GM13976 (cell line): ENCODE measurements at regions of chr9 and their contacts with region 1.

Region 1: GRCh38 chr9:32251539-32251938 is 132.9 kb upstream of the ACO1 start:
- DNase-seq: peak; percentile 65
- CTCF ChIP-seq: peak; percentile 66

Region 2: GRCh38 chr9:32136700-32137339 is 114.7 kb before region 1 on chr9:
- in situ Hi-C with region 1: loop called (anchors 10 kb)
- DNase-seq: no peak
- CTCF ChIP-seq: no peak

Region 3: DNA sequence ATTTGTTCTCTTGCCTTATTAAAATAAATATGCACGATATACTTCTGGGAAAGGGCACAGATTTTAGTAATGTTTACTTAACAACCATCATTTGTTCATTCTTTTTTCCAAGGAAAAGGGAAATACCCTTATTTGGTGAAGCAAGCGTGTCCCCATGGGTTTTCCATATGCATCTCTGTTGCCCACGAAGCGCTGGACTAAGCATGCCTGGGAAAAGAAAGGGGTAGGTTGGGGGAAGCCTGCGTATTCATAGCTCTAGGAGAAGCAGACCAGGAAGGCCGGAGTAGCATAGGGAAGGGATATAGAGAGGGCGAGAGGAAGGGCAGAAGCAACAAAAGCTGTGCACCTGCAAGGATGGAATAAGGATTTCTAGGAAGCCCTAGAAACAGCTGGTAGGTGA is 71.1 kb after region 1 on chr9:
- in situ Hi-C with region 1: no loop called
- DNase-seq: no peak
- CTCF ChIP-seq: no peak